GM18951 (cell line): ENCODE measurements at regions of chr1 and their contacts with region 1.

Region 1: DNA sequence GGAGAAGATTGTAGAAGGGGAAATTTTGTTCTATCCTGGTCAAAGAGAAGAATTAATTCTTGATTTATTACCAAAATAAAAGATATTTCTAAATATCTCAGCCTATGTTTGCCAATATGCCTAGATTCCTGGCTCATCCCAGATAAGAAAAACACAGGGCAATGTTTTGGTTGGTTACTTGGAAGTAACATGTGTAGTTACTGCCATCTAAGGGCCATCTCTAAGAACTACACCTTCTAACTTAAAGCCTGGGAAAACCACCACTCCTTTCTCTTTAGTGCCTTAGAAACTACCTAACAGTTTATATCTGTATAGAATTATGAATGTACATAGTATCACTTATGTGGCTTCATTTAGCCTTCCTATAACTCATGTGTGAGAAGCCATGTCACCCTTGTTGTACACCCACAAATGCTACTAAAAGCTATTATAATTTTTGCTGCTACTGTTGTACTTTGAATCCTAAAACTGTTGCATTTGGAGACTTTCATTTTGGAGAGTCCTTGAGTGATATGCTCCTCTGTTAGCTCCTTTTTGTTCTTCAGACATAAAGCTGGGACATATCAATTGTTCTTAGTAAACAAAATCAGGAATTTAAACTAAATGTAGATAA is 4.5 kb downstream of the AIM2 start:
- POLR2A ChIP-seq: no peak

Region 2: GRCh38 chr1:158285756-158286241 is 786.3 kb before region 1 on chr1:
- in situ Hi-C with region 1: loop called (anchors 25 kb)
- POLR2A ChIP-seq: peak; percentile 13

Region 3: DNA sequence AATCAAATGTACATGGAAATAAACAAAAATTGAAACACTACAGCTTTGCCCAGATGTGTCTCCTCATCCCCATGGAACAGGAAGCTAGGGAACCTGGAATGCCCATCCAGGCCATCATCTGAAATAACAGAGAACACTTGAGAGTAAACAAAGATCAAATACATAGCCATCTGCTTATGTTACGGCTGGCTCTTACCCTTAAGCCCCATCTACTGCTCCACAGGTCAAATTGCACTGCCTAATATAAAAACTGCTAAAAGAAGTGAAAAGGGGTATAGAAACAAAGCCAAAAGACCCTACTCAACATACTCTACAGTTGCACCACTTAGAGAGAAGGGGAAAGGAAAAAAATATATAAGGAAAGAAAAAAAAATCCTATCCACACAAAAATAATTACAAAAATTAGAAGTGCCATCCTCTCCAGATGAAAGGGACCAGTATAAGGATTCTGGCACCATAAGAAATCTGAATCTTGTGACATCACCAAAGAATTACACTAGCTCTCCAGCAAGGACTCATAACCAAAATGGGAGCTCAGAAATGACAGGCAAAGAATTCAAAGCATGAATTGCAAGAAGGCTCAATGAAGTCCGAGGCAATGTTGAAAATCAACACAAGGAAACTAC is 544.8 kb before region 1 on chr1:
- in situ Hi-C with region 1: no loop called
- POLR2A ChIP-seq: no peak

Region 4: GRCh38 chr1:158864595-158864994 is 207.5 kb before region 1 on chr1:
- in situ Hi-C with region 1: no loop called
- POLR2A ChIP-seq: no peak

Region 5: DNA sequence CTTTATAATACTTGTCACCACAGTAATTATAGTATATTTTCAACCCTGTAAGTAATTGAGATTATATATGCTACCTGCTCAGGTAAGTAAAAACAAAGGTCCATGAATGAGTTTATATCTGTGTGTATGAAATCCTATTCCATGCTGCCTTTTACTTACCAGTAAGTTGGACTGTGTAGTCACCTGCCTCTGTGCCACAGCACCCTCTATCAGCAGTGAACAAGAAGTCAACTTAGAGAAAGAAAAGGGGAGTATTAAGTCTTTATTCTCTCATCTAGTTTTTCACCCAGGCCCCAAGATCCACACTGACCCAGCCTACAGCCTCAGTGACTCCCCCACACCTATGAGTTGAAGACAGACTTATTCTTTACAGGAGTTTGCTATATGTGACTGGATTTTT is 99.2 kb before region 1 on chr1:
- in situ Hi-C with region 1: no loop called
- POLR2A ChIP-seq: no peak